ENCODE measurements at regions of chr17 and their contacts with region 1.

Region 1: GRCh38 chr17:700504-701094 is 14.0 kb downstream of the VPS53 start:
- H3K4me3 Mint-ChIP-seq: no peak overlapping the region
- H3K27ac Mint-ChIP-seq: no peak overlapping the region
- H3K4me1 Mint-ChIP-seq: peaks cover 21% of the 10 kb centered on the region
- H3K27me3 Mint-ChIP-seq: no peaks in the 10 kb centered on the region

Region 2: GRCh38 chr17:412211-413015 is 288.2 kb before region 1 on chr17:
- intact Hi-C with region 1: loop called (anchors 1 kb)
- H3K4me3 Mint-ChIP-seq: peak overlapping the region; percentile 30
- H3K27ac Mint-ChIP-seq: peak overlapping the region; percentile 46
- H3K4me1 Mint-ChIP-seq: peaks cover 57% of the 10 kb centered on the region
- H3K27me3 Mint-ChIP-seq: peaks cover 17% of the 10 kb centered on the region

Region 3: GRCh38 chr17:732067-732901 is 31.7 kb after region 1 on chr17 and contains the start of gene TLCD3A:
- intact Hi-C with region 1: no loop called
- H3K4me3 Mint-ChIP-seq: peak within 1 kb of the TSS; percentile 81
- H3K27ac Mint-ChIP-seq: no peak within 1 kb of the TSS
- H3K4me1 Mint-ChIP-seq: peaks cover 12% of the 10 kb centered on the region
- H3K27me3 Mint-ChIP-seq: peaks cover 44% of the 10 kb centered on the region

Measured in dendritic cell treated with granulocyte-macrophage colony-stimulating factor and Interleukin-4, amounts not matched to agents 40 ng/mL and 50 ng/mL, for 4 days (primary cell).